CD8-positive, alpha-beta memory T cell (primary cell): ENCODE measurements at regions of chr1 and their contacts with region 1.

Region 1: GRCh38 chr1:161726596-161727457 is 5.5 kb downstream of the FCRLB start:
- DNase-seq: peak; percentile 68 to 84 (median 70)
- H3K4me3 ChIP-seq: peak overlapping the region; percentile 93
- H3K4me3 Mint-ChIP-seq: peak overlapping the region; percentile 94 to 99 (median 97)
- H3K27ac ChIP-seq: peak overlapping the region; percentile 89
- H3K27ac Mint-ChIP-seq: peak overlapping the region; percentile 84 to 89 (median 86)
- H3K4me1 ChIP-seq: peaks cover 23% of the 10 kb centered on the region
- H3K4me1 Mint-ChIP-seq: peaks cover 36 to 48% (median 47%) of the 10 kb centered on the region in 3 donors
- H3K27me3 ChIP-seq: no peaks in the 10 kb centered on the region
- H3K27me3 Mint-ChIP-seq: no peaks in the 10 kb centered on the region

Region 2: GRCh38 chr1:161749509-161750407 is 22.9 kb after region 1 on chr1 and contains the start of gene DUSP12:
- CTCF ChIA-PET with region 1: interaction called, 12 read pairs
- POLR2A ChIA-PET with region 1: interaction called, 17 read pairs
- DNase-seq: peak; percentile 72 to 87 (median 83)
- H3K4me3 ChIP-seq: peak within 1 kb of the TSS; percentile 87
- H3K4me3 Mint-ChIP-seq: peak within 1 kb of the TSS; percentile 94 to 100 (median 99)
- H3K27ac ChIP-seq: peak within 1 kb of the TSS; percentile 76
- H3K27ac Mint-ChIP-seq: peak within 1 kb of the TSS; percentile 79 to 99 (median 96)
- H3K4me1 ChIP-seq: peaks cover 21% of the 10 kb centered on the region
- H3K4me1 Mint-ChIP-seq: peaks cover 28 to 52% (median 47%) of the 10 kb centered on the region in 3 donors
- H3K27me3 ChIP-seq: no peaks in the 10 kb centered on the region
- H3K27me3 Mint-ChIP-seq: peaks cover 0 to 1% of the 10 kb centered on the region in 2 donors
- total RNA-seq, gene DUSP12: 39.7 to 40.4 TPM

Region 3: DNA sequence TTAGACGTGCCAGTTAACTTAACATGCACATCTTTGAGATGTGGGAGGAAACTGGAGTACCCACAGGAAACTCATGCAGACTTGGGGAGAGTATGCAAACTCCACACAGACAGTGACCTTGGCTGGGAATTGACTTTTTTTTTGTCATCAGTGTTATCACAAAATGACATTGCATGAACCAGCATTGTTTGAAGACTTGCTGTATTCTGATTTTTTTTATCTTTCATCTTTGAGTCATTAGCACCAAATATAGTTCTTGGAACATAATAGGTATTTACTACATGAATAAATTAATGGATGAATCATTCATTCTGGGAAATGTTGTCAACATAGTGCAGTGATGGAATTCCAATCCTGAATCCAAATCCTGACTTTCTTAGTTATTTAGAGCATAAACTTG is 116.3 kb after region 1 on chr1:
- CTCF ChIA-PET with region 1: no interaction called
- POLR2A ChIA-PET with region 1: no interaction called
- DNase-seq: no peak
- H3K4me3 ChIP-seq: no peak overlapping the region
- H3K4me3 Mint-ChIP-seq: no peak overlapping the region
- H3K27ac ChIP-seq: no peak overlapping the region
- H3K27ac Mint-ChIP-seq: no peak overlapping the region
- H3K4me1 ChIP-seq: no peaks in the 10 kb centered on the region
- H3K4me1 Mint-ChIP-seq: peaks cover 0 to 7% (median 6%) of the 10 kb centered on the region in 3 donors
- H3K27me3 ChIP-seq: no peaks in the 10 kb centered on the region
- H3K27me3 Mint-ChIP-seq: no peaks in the 10 kb centered on the region